Activated T-helper 1 cell treated with anti-CD3 and anti-CD28 coated beads, Interleukin-12 subunit alpha, Interleukin-12 subunit beta, Interleukin-2, Interleukin-4 antibody, amounts not matched to agents 30 ng/mL and 10 ng/mL and 1 ng/mL, durations not matched to agents 14 hours and 24 hours and 36 hours (primary cell): ENCODE measurements at regions of chr5 and their contacts with region 1.

Region 1: GRCh38 chr5:142699184-142699720 is 13.4 kb upstream of the FGF1 start:
- DNase-seq: peak; percentile 56
- H3K4me3 Mint-ChIP-seq: no peak overlapping the region
- H3K27ac Mint-ChIP-seq: no peak overlapping the region
- H3K4me1 Mint-ChIP-seq: no peaks in the 10 kb centered on the region
- H3K27me3 Mint-ChIP-seq: peaks cover 13% of the 10 kb centered on the region

Region 2: GRCh38 chr5:141992349-141992963 is 706.8 kb before region 1 on chr5:
- intact Hi-C with region 1: loop called (anchors 1 kb)
- DNase-seq: peak; percentile 53
- H3K4me3 Mint-ChIP-seq: no peak overlapping the region
- H3K27ac Mint-ChIP-seq: no peak overlapping the region
- H3K4me1 Mint-ChIP-seq: peaks cover 18% of the 10 kb centered on the region
- H3K27me3 Mint-ChIP-seq: no peaks in the 10 kb centered on the region

Region 3: DNA sequence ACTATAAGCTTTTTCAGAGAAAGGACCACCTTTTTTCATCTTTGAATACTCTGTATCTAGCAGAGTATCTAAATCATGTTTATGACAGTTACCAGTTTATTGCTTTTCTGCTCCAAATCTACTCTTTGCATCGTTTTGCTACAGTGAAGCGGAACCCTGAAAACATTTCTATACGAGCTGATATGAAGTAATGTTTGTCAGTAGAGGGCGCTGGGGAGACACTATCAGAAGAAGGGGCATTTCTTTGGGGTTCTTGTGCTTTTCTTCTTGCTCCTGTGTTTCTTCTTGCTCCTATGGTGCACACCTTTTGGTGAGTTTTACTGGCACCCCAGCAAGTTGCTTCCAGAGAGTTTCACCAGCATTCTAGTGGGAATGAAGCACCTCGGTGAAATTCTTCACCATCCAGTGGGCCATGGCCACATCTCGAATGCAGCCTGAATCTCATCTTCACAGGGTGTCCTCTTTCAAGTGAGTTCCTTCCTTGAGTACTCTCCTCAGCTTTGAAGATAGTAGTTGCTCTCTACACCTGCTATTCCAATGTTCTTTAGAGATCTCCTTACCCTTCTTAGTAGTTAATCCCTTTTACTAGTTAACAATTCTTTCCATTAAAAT is 111.8 kb before region 1 on chr5:
- intact Hi-C with region 1: loop called (anchors 1 kb)
- DNase-seq: no peak
- H3K4me3 Mint-ChIP-seq: no peak overlapping the region
- H3K27ac Mint-ChIP-seq: no peak overlapping the region
- H3K4me1 Mint-ChIP-seq: no peaks in the 10 kb centered on the region
- H3K27me3 Mint-ChIP-seq: peaks cover 31% of the 10 kb centered on the region

Region 4: GRCh38 chr5:142611154-142611553 is 88.1 kb before region 1 on chr5:
- intact Hi-C with region 1: loop called (anchors 1 kb)
- DNase-seq: peak; percentile 44
- H3K4me3 Mint-ChIP-seq: no peak overlapping the region
- H3K27ac Mint-ChIP-seq: no peak overlapping the region
- H3K4me1 Mint-ChIP-seq: no peaks in the 10 kb centered on the region
- H3K27me3 Mint-ChIP-seq: peaks cover 19% of the 10 kb centered on the region

Region 5: GRCh38 chr5:142655339-142656267 is 43.6 kb before region 1 on chr5:
- intact Hi-C with region 1: loop called (anchors 1 kb)
- DNase-seq: peak; percentile 45
- H3K4me3 Mint-ChIP-seq: no peak overlapping the region
- H3K27ac Mint-ChIP-seq: no peak overlapping the region
- H3K4me1 Mint-ChIP-seq: no peaks in the 10 kb centered on the region
- H3K27me3 Mint-ChIP-seq: peaks cover 13% of the 10 kb centered on the region